ENCODE measurements at regions of chr20 and their contacts with region 1.

Region 1: GRCh38 chr20:60690771-60691170 is 561.3 kb upstream of the CDH4 start:
- DNase-seq: no peak
- ATAC-seq: no peak
- H3K4me3 ChIP-seq: no peak overlapping the region
- H3K27ac ChIP-seq: no peak overlapping the region
- H3K4me1 ChIP-seq: no peaks in the 10 kb centered on the region
- H3K27me3 ChIP-seq: peaks cover 0 to 3% (median 0%) of the 10 kb centered on the region in 3 donors
- CTCF ChIP-seq: no peak

Region 2: DNA sequence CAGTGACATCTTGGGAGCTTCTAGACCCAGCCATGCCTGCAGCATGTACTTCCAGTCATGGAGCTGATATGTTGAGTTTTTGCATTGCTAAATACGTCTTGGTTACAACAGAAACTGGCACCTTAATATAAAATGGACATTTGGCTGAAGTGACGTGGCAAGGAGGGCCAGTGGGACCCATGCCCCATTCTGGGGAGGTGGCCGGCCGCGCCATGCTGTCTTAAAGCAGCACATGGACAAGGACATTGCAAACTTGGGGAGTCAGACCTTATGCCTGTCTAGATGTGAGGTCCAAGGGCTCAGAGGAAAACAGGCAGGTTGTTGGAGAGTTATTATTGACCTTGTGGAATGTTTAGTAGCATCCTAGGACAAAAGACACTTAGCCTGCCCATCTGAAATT is 26.7 kb before region 1 on chr20:
- intact Hi-C with region 1: loop called in 1 of 2 experiments (anchors 2 kb)
- DNase-seq: no peak
- ATAC-seq: no peak
- H3K4me3 ChIP-seq: no peak overlapping the region
- H3K27ac ChIP-seq: no peak overlapping the region
- H3K4me1 ChIP-seq: no peaks in the 10 kb centered on the region
- H3K27me3 ChIP-seq: peaks cover 0 to under 1% (median 0%) of the 10 kb centered on the region in 3 donors
- CTCF ChIP-seq: no peak